Heart right ventricle (tissue), 16 donors: ENCODE measurements at regions of chr7 and their contacts with region 1.

Region 1: GRCh38 chr7:106736508-106737201 is 75.7 kb upstream of the CCDC71L start:
- DNase-seq: peak in 1 of 2 donors; percentile 46
- ATAC-seq: peak in 6 of 8 donors; percentile 78 to 89 (median 84)
- H3K4me3 ChIP-seq: no peak overlapping the region
- H3K27ac ChIP-seq: no peak overlapping the region
- H3K4me1 ChIP-seq: peaks cover 0 to 18% (median 6%) of the 10 kb centered on the region in 9 donors
- H3K27me3 ChIP-seq: peaks cover 0 to under 1% (median 0%) of the 10 kb centered on the region in 7 donors
- CTCF ChIP-seq: peak; percentile 20 to 81 (median 64)

Region 2: DNA sequence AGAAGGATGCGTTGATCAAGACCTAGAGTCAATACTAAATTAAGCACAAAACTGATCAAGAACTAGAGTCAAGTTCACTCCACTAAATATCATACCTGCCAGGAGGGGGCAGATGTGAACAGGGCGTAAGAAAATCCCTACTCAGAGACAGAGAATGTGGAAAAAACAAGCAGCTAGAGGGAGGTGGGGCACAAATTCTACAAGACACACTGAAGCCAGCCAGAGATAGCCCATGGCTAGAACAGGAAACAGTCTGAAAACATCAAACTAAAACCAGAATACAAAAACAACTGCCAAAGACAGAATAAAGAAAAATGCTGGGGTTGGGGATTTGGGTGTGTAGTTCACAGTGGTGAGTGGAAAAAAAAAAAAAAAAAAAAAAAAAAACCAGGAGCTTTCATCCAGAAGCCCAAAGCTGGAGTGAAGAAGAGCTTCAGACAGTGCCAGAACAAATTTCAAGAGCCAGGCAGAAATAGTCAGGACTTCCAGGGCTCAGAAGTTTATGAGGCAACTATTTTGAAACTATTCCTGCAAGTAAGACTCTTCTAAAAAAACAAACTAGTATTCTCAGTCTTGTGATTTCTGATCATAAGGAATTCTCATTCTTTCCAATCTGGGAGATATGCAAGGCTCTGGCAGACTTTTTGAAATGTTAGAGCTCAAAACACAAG is 194.0 kb before region 1 on chr7:
- intact Hi-C with region 1: loop called in 8 of 10 experiments (anchors 1 to 10 kb)
- DNase-seq: peak in 1 of 2 donors; percentile 61
- ATAC-seq: peak in 7 of 8 donors; percentile 51 to 89 (median 86)
- H3K4me3 ChIP-seq: no peak overlapping the region
- H3K27ac ChIP-seq: peak overlapping the region in 1 of 10 donors; percentile 19
- H3K4me1 ChIP-seq: peaks cover 0 to 15% (median 6%) of the 10 kb centered on the region in 9 donors
- H3K27me3 ChIP-seq: no peaks in the 10 kb centered on the region
- CTCF ChIP-seq: peak; percentile 32 to 73 (median 61)

Region 3: GRCh38 chr7:106848851-106849442 is 112.3 kb after region 1 on chr7:
- intact Hi-C with region 1: no loop called
- DNase-seq: no peak
- ATAC-seq: no peak
- H3K4me3 ChIP-seq: no peak overlapping the region
- H3K27ac ChIP-seq: no peak overlapping the region
- H3K4me1 ChIP-seq: no peaks in the 10 kb centered on the region
- H3K27me3 ChIP-seq: peaks cover 0 to 7% (median 0%) of the 10 kb centered on the region in 7 donors
- CTCF ChIP-seq: no peak